ENCODE measurements at regions of chr19 and their contacts with region 1.

Region 1: DNA sequence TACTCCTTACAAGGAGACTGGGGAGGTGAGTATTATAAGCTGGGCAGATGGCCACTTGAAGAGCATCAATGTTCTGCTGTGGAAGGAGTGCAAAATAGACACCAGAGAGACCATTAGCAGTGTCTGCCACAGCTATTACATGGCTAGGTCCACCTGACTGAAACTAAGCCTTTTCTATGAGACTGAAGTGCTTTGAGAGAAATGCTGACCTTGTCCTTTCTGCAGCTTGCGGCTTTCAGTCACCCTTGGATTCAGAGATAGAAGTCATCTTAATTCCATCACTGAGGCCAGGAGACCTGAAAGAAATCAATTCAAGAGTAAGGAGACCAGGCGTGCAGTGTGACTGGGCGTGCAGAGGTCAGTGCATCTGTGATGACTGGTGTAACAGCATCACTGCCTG is 1.3 kb upstream of the ZFP28 start:
- DNase-seq: no peak
- H3K4me3 ChIP-seq: no peak overlapping the region
- H3K27ac ChIP-seq: no peak overlapping the region
- H3K4me1 ChIP-seq: no peaks in the 10 kb centered on the region
- H3K27me3 ChIP-seq: no peaks in the 10 kb centered on the region
- CTCF ChIP-seq: no peak

Region 2: GRCh38 chr19:56507446-56508289 is 29.8 kb before region 1 on chr19 and contains the start of gene ZNF471:
- CTCF ChIA-PET with region 1: no interaction called
- POLR2A ChIA-PET with region 1: no interaction called
- intact Hi-C with region 1: loop called (anchors 1 kb)
- DNase-seq: peak; percentile 95
- H3K4me3 ChIP-seq: peak within 1 kb of the TSS; percentile 58
- H3K27ac ChIP-seq: peak within 1 kb of the TSS; percentile 95
- H3K4me1 ChIP-seq: no peaks in the 10 kb centered on the region
- H3K27me3 ChIP-seq: no peaks in the 10 kb centered on the region
- CTCF ChIP-seq: no peak
- total RNA-seq, gene ZNF471: 1.6 and 2.9 TPM in 2 replicates